Right ventricle myocardium inferior (tissue), 1 donor: ENCODE measurements at regions of chr1 and their contacts with region 1.

Region 1: GRCh38 chr1:117612517-117613248 is 6.8 kb downstream of the TENT5C start:
- DNase-seq: no peak
- ATAC-seq: peak; percentile 47

Region 2: DNA sequence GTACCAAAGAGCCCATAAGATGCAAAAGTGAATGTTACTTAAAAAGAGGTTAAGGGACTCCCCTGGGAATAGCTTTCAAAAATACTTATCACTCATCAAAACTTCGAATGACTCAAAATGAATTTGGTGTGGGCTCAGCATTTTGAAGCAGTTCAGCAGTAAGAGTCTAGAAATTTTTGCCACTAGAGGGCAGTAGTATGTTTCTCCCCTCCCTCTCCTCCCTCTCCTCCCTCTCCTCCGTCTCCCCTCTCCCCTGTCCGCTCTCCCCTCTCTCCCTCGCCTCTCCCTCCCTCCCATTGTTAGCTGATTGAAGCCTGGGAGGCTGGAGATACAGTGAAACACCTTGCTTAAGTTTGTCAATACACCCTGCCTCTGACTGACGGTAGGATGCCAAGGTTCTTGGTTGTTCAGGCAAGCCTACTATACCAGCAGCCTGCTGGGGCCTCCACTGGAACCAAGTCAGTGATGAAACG is 77.7 kb before region 1 on chr1:
- intact Hi-C with region 1: loop called (anchors 5 kb)
- DNase-seq: no peak
- ATAC-seq: peak; percentile 84